ENCODE measurements at regions of chr1 and their contacts with region 1.

Region 1: GRCh38 chr1:206663832-206664652 is 20.7 kb upstream of the MAPKAPK2 start:
- DNase-seq: peak; percentile 64 to 65
- ATAC-seq: peak; percentile 84 to 91
- H3K4me3 ChIP-seq: no peak overlapping the region
- H3K27ac ChIP-seq: peak overlapping the region in 1 of 2 experiments; percentile 37; a peak in 2 of 6 replicates
- H3K4me1 ChIP-seq: peaks cover 7% of the 10 kb centered on the region; the same call in 1 of the 3 replicates
- CTCF ChIP-seq: peak; percentile 86
- EP300 ChIP-seq: no peak
- POLR2A ChIP-seq: no peak
- RAD21 ChIP-seq: peak; percentile 82 to 87

Region 2: DNA sequence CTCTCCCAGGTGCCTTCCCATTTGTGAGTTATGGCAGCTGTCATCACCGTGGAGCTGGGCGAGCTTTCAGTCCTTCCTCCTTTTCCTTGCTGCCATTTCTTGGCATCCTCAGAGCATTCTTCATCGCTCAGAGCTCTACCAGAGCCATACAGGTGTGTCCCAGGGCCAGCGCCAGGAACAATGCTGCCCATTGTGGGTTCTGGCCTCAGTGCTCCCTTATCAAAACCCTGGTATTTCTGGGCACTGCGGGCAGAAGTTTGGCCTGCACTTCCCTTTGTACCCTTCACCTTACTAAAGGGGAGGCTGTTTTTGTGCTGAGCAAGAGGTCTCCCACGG is 128.2 kb before region 1 on chr1:
- CTCF ChIA-PET with region 1: no interaction called
- POLR2A ChIA-PET with region 1: no interaction called
- DNase-seq: no peak
- ATAC-seq: no peak
- H3K4me3 ChIP-seq: no peak overlapping the region
- H3K27ac ChIP-seq: no peak overlapping the region
- H3K4me1 ChIP-seq: no peaks in the 10 kb centered on the region
- CTCF ChIP-seq: no peak
- EP300 ChIP-seq: no peak
- POLR2A ChIP-seq: no peak
- RAD21 ChIP-seq: no peak

Region 3: GRCh38 chr1:206600527-206600926 is 63.5 kb before region 1 on chr1:
- CTCF ChIA-PET with region 1: interaction called, 61 read pairs
- POLR2A ChIA-PET with region 1: no interaction called
- DNase-seq: no peak
- ATAC-seq: no peak
- H3K4me3 ChIP-seq: no peak overlapping the region
- H3K27ac ChIP-seq: no peak overlapping the region
- H3K4me1 ChIP-seq: no peaks in the 10 kb centered on the region
- CTCF ChIP-seq: no peak
- EP300 ChIP-seq: no peak
- POLR2A ChIP-seq: no peak
- RAD21 ChIP-seq: no peak

Region 4: DNA sequence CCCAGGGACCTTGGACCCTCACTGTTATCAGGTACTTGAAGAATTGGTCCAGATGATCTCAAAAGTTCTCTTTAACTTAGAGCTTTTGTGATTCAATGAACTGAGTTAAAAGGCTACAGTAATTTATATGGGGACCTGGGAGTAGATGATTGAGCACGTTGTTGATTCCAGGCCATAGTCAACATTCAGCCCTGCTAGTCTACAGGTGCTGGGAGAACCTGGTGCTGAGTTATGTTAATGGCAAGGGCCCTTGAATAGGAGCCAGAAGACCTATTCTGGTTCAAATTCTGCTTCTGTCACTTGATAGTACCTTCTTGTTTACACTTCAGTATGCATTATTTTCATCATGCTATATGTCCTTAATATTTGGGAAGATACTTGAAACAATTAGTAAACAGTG is 17.5 kb before region 1 on chr1:
- CTCF ChIA-PET with region 1: interaction called, 452 read pairs
- POLR2A ChIA-PET with region 1: no interaction called
- DNase-seq: no peak
- ATAC-seq: no peak
- H3K4me3 ChIP-seq: no peak overlapping the region
- H3K27ac ChIP-seq: no peak overlapping the region
- H3K4me1 ChIP-seq: no peaks in the 10 kb centered on the region
- CTCF ChIP-seq: no peak
- EP300 ChIP-seq: no peak
- POLR2A ChIP-seq: no peak
- RAD21 ChIP-seq: no peak

Region 5: DNA sequence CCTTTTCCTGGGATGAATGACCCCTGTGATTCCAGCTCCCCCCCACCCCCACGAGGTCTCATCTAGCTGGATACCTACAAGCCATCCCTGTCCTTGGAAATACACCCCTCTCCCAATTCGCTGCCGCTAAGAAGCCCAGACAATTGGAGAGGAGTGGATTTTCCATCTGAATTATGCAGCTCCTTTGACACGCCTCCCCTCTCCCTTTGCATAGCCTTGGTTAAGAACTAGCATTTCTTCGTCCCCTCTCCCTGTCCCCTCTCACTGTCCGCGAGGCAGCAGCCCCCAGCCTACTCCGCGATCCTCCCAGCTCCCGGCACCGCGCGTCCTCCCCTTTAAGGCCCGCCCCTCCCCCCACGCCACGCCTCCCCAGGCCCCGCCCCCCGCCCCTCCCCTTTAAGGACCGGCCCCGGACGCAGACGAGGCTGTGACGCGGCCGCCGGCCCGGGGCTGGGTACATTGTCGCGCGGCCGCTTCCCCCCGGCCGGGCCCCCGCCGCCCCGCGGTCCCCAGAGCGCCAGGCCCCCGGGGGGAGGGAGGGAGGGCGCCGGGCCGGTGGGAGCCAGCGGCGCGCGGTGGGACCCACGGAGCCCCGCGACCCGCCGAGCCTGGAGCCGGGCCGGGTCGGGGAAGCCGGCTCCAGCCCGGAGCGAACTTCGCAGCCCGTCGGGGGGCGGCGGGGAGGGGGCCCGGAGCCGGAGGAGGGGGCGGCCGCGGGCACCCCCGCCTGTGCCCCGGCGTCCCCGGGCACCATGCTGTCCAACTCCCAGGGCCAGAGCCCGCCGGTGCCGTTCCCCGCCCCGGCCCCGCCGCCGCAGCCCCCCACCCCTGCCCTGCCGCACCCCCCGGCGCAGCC is 20.7 kb after region 1 on chr1 and contains the start of gene MAPKAPK2:
- CTCF ChIA-PET with region 1: interaction called, 40 read pairs
- POLR2A ChIA-PET with region 1: interaction called, 5 read pairs
- DNase-seq: peak; percentile 72 to 91
- ATAC-seq: peak; percentile 72 to 84
- H3K4me3 ChIP-seq: peak within 1 kb of the TSS; percentile 91
- H3K27ac ChIP-seq: peak within 1 kb of the TSS; percentile 97 to 99
- H3K4me1 ChIP-seq: peaks cover 36% of the 10 kb centered on the region
- CTCF ChIP-seq: no peak
- EP300 ChIP-seq: no peak
- POLR2A ChIP-seq: peak; percentile 42
- RAD21 ChIP-seq: no peak
- polyA plus RNA-seq, gene MAPKAPK2: 37.2 and 48.5 TPM in 2 replicates

Region 6: GRCh38 chr1:206716870-206717673 is 53.0 kb after region 1 on chr1:
- CTCF ChIA-PET with region 1: interaction called, 13 read pairs
- POLR2A ChIA-PET with region 1: no interaction called
- DNase-seq: no peak
- ATAC-seq: no peak
- H3K4me3 ChIP-seq: no peak overlapping the region
- H3K27ac ChIP-seq: peak overlapping the region; percentile 70 to 74
- H3K4me1 ChIP-seq: peaks cover 88% of the 10 kb centered on the region
- CTCF ChIP-seq: no peak
- EP300 ChIP-seq: no peak
- POLR2A ChIP-seq: no peak
- RAD21 ChIP-seq: no peak

Region 7: GRCh38 chr1:206826405-206826804 is 162.4 kb after region 1 on chr1:
- CTCF ChIA-PET with region 1: no interaction called
- POLR2A ChIA-PET with region 1: no interaction called
- DNase-seq: no peak
- ATAC-seq: no peak
- H3K4me3 ChIP-seq: no peak overlapping the region
- H3K27ac ChIP-seq: 0 out of 6 replicates have a peak overlapping the region, but pooled peaks of 1 of the 2 experiments have one; percentile 23
- H3K4me1 ChIP-seq: no peaks in the 10 kb centered on the region
- CTCF ChIP-seq: no peak
- EP300 ChIP-seq: no peak
- POLR2A ChIP-seq: no peak
- RAD21 ChIP-seq: no peak

Region 8: DNA sequence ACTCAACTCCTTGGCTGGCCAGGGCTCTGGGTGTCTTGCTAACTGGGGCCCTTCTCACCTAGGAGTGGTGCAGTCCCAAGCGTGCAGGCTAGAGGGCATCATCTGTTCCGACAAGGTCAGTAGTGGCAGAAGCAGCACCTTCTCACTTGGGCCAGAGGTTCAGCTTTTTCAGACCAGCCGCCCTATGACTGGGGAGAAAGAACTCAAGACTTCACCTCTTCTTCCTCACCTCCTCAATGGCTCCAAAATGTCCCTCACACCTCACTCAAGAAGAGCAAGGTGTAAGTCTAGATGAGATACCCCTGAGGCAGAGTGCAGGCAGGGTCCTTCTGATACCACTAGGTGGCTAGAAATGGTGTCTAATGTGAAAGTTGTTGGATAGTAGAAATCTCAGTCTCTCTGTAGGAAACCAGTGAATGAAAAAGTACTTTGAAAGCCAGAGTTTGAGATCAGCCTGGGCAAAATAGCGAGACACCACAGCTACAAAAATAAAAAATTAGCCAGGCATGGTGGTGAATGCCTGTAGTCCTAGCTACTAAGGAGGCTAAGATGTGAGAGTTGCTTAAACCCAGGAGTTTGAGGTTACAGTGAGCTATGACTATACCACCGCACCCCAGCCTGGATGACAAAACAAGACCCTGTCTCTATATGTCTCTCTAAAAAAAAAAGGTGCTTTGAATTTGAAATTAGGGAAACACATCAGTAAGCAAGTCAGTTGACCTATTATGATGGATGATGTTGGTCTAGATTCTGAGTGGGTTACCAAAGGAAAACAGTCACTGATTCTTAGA is 192.8 kb after region 1 on chr1:
- CTCF ChIA-PET with region 1: no interaction called
- POLR2A ChIA-PET with region 1: no interaction called
- DNase-seq: peak; percentile 27 to 43
- ATAC-seq: peak; percentile 77 to 94
- H3K4me3 ChIP-seq: no peak overlapping the region
- H3K27ac ChIP-seq: no peak overlapping the region
- H3K4me1 ChIP-seq: no peaks in the 10 kb centered on the region
- CTCF ChIP-seq: peak; percentile 51
- EP300 ChIP-seq: no peak
- POLR2A ChIP-seq: no peak
- RAD21 ChIP-seq: peak; percentile 34 to 38; a peak in 2 of 5 replicates

Measured in A549 (cell line).